ENCODE measurements at regions of chr1 and their contacts with region 1.

Region 1: GRCh38 chr1:68470388-68470970 is 20.7 kb upstream of the RPE65 start:
- DNase-seq: no peak
- H3K4me3 ChIP-seq: no peak overlapping the region
- H3K27ac ChIP-seq: no peak overlapping the region
- H3K4me1 ChIP-seq: no peaks in the 10 kb centered on the region; a peak in 1 of 4 replicates
- H3K27me3 ChIP-seq: no peaks in the 10 kb centered on the region
- CTCF ChIP-seq: peak; percentile 91
- EP300 ChIP-seq: no peak
- RAD21 ChIP-seq: peak; percentile 81

Region 2: GRCh38 chr1:68459796-68460195 is 10.7 kb before region 1 on chr1:
- CTCF ChIA-PET with region 1: interaction called, 12 read pairs
- POLR2A ChIA-PET with region 1: no interaction called
- DNase-seq: no peak
- H3K4me3 ChIP-seq: no peak overlapping the region
- H3K27ac ChIP-seq: no peak overlapping the region
- H3K4me1 ChIP-seq: no peaks in the 10 kb centered on the region; a peak in 1 of 4 replicates
- H3K27me3 ChIP-seq: no peaks in the 10 kb centered on the region
- CTCF ChIP-seq: no peak
- EP300 ChIP-seq: no peak
- RAD21 ChIP-seq: no peak

Region 3: DNA sequence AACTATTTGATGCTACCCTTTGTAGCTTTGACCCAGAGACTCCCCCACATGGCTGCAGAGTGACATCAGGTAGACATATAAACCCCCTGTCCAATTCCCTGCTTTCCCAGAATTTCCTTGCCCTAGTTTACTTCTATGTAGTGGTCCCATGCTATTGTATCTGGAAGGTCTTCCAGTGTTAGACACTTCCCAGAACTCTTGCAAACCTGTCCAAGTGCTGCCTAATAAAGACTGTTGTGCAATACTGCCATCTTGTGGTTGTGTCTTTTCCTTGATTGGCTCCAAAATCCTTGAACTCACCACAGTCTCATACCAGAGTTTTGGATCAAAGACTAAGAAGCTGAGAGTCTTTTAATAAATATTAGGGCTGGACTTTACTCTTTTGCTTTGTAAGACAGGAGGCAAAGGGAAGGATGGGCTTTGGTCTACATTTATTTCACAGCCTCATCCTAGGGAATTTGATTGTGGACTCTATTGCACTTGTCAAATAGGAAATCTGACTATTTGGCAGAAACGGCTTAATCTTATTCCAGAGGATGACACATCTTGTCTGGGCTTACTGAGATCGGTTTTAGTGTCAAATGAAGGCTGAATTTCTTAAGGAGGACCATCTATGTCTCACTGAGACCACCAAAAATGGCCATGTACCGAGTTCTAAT is 1267.2 kb after region 1 on chr1:
- CTCF ChIA-PET with region 1: interaction called, 25 read pairs
- POLR2A ChIA-PET with region 1: no interaction called
- DNase-seq: peak; percentile 9
- H3K4me3 ChIP-seq: no peak overlapping the region
- H3K27ac ChIP-seq: no peak overlapping the region
- H3K4me1 ChIP-seq: no peaks in the 10 kb centered on the region; a peak in 3 of 4 replicates
- H3K27me3 ChIP-seq: no peaks in the 10 kb centered on the region
- CTCF ChIP-seq: peak; percentile 77
- EP300 ChIP-seq: no peak
- RAD21 ChIP-seq: peak; percentile 95